Common myeloid progenitor, CD34-positive (primary cell): ENCODE measurements at regions of chr10 and their contacts with region 1.

Region 1: GRCh38 chr10:107814865-107815487 is 650.5 kb upstream of the SORCS1 start:
- DNase-seq: peak; percentile 27 to 64 (median 46)
- H3K4me3 ChIP-seq: no peak overlapping the region
- H3K27ac ChIP-seq: no peak overlapping the region
- H3K4me1 ChIP-seq: no peaks in the 10 kb centered on the region
- H3K27me3 ChIP-seq: no peaks in the 10 kb centered on the region

Region 2: DNA sequence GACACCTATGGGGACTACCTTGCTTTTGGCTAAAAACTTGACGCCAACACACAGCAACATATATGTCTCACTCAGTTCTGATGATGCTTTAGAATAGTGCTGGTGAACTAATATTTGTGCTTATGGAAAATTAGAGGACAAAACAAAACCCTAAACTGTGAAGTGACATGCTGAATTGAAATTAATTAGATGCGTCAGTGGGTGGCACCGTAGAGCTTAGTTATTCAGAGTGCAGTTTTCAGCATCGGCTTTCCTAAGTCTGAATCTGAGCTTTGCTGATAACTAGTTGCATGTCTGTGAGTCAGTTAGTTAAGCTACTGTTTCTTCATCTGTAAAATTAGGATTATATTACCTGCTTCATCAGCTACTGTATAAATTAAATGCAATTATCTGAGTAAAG is 405.5 kb before region 1 on chr10:
- CTCF ChIA-PET with region 1: interaction called, 13 read pairs
- POLR2A ChIA-PET with region 1: no interaction called
- DNase-seq: peak; percentile 8 to 23 (median 18)
- H3K4me3 ChIP-seq: no peak overlapping the region
- H3K27ac ChIP-seq: no peak overlapping the region
- H3K4me1 ChIP-seq: no peaks in the 10 kb centered on the region
- H3K27me3 ChIP-seq: no peaks in the 10 kb centered on the region

Region 3: GRCh38 chr10:107771066-107771465 is 43.9 kb before region 1 on chr10:
- CTCF ChIA-PET with region 1: no interaction called
- POLR2A ChIA-PET with region 1: no interaction called
- DNase-seq: no peak
- H3K4me3 ChIP-seq: no peak overlapping the region
- H3K27ac ChIP-seq: no peak overlapping the region
- H3K4me1 ChIP-seq: no peaks in the 10 kb centered on the region
- H3K27me3 ChIP-seq: no peaks in the 10 kb centered on the region

Region 4: DNA sequence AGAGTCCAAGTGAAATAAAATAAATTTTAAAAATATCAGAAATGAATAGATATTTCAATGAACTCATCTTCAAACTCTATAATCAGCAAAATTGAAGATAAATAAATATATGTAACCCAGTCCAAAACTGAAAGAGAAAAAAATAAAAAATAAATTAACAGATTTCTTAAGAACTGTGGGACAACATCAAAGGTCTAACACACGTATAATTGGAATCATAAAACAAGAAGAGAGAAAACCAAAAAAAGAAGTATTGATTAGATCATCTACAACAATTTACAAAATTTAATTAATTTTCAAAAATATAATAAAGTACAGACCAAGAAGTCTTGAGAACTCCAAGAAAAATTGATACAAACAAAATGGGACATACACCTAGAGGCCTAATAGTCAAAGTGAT is 24.7 kb before region 1 on chr10:
- CTCF ChIA-PET with region 1: no interaction called
- POLR2A ChIA-PET with region 1: no interaction called
- DNase-seq: peak in 2 of 3 donors; percentile 0 to 6
- H3K4me3 ChIP-seq: no peak overlapping the region
- H3K27ac ChIP-seq: no peak overlapping the region
- H3K4me1 ChIP-seq: no peaks in the 10 kb centered on the region
- H3K27me3 ChIP-seq: no peaks in the 10 kb centered on the region